Tibial artery (tissue), 4 donors: ENCODE measurements at regions of chr1 and their contacts with region 1.

Region 1: GRCh38 chr1:3553166-3553939 is 58.0 kb downstream of the MEGF6 start:
- DNase-seq: no peak
- H3K4me3 ChIP-seq: no peak overlapping the region
- H3K27ac ChIP-seq: no peak overlapping the region
- H3K4me1 ChIP-seq: peaks cover 0 to 73% (median 52%) of the 10 kb centered on the region in 4 donors
- H3K27me3 ChIP-seq: no peaks in the 10 kb centered on the region
- CTCF ChIP-seq: no peak

Region 2: GRCh38 chr1:3491291-3492246 is 61.8 kb before region 1 on chr1:
- intact Hi-C with region 1: loop called (anchors 5 kb)
- DNase-seq: peak; percentile 64 to 82
- H3K4me3 ChIP-seq: no peak overlapping the region
- H3K27ac ChIP-seq: no peak overlapping the region
- H3K4me1 ChIP-seq: peaks cover 0 to 10% (median 2%) of the 10 kb centered on the region in 4 donors
- H3K27me3 ChIP-seq: no peaks in the 10 kb centered on the region
- CTCF ChIP-seq: peak; percentile 96 to 100

Region 3: GRCh38 chr1:3522564-3523265 is 30.6 kb before region 1 on chr1:
- intact Hi-C with region 1: loop called (anchors 5 kb)
- DNase-seq: no peak
- H3K4me3 ChIP-seq: no peak overlapping the region
- H3K27ac ChIP-seq: no peak overlapping the region
- H3K4me1 ChIP-seq: peaks cover 0 to 26% (median 23%) of the 10 kb centered on the region in 4 donors
- H3K27me3 ChIP-seq: no peaks in the 10 kb centered on the region
- CTCF ChIP-seq: no peak

Region 4: DNA sequence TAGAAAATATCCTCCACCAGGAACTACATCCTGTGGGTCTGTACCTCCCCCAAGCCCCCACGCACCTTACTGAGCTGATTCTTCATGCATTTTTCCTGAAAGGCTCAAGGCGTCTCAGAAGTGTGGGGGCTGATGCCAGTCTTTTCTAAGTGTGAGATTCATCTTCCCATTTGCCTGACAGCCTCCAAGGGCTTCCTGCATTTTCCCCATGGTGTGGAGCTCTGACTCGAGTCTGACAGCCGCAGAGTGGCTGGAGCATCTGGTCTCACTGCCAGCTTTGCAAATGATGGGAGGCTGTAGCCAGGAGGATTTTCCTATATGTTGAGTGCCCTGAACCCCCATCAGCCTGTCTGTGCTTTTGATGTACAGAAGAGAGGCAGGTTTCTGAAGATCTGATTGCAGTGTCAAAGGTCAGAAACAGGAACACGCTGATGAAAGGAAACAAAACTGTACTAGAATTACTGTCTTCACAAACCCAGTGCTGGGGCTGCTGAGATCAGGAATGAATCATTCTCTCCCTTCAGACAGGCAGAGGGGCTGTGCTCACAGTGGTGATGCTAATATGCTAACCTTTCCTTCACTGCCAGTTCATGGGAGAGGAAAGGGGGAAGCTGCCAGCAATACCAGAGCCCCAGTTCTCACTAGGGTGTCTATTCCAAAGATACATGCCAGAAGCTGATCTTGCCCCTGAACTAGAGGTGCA is 548.3 kb after region 1 on chr1:
- intact Hi-C with region 1: no loop called
- DNase-seq: peak in 1 of 2 donors; percentile 31
- H3K4me3 ChIP-seq: no peak overlapping the region
- H3K27ac ChIP-seq: no peak overlapping the region
- H3K4me1 ChIP-seq: no peaks in the 10 kb centered on the region
- H3K27me3 ChIP-seq: peaks cover 0 to 13% of the 10 kb centered on the region in 2 donors
- CTCF ChIP-seq: no peak